Dendritic cell treated with granulocyte-macrophage colony-stimulating factor and Interleukin-4, amounts not matched to agents 40 ng/mL and 50 ng/mL, for 4 days (primary cell): ENCODE measurements at regions of chr15 and their contacts with region 1.

Region 1: GRCh38 chr15:78195735-78196201 is 38.6 kb downstream of the ACSBG1 start:
- H3K4me3 Mint-ChIP-seq: no peak overlapping the region
- H3K27ac Mint-ChIP-seq: no peak overlapping the region
- H3K4me1 Mint-ChIP-seq: peaks cover 1% of the 10 kb centered on the region
- H3K27me3 Mint-ChIP-seq: peaks cover 1% of the 10 kb centered on the region

Region 2: GRCh38 chr15:78061963-78062435 is 133.8 kb before region 1 on chr15:
- intact Hi-C with region 1: no loop called
- H3K4me3 Mint-ChIP-seq: peak overlapping the region; percentile 44
- H3K27ac Mint-ChIP-seq: peak overlapping the region; percentile 74
- H3K4me1 Mint-ChIP-seq: peaks cover 39% of the 10 kb centered on the region
- H3K27me3 Mint-ChIP-seq: no peaks in the 10 kb centered on the region

Region 3: GRCh38 chr15:78131295-78132061 is 64.3 kb before region 1 on chr15 and contains the start of gene CIB2:
- intact Hi-C with region 1: loop called (anchors 1 kb)
- H3K4me3 Mint-ChIP-seq: peak within 1 kb of the TSS; percentile 79
- H3K27ac Mint-ChIP-seq: peak within 1 kb of the TSS; percentile 82
- H3K4me1 Mint-ChIP-seq: peaks cover 29% of the 10 kb centered on the region
- H3K27me3 Mint-ChIP-seq: peaks cover 13% of the 10 kb centered on the region